CD8-positive, alpha-beta T cell (primary cell): ENCODE measurements at regions of chr22 and their contacts with region 1.

Region 1: GRCh38 chr22:49852898-49853894 is at the start of gene ZBED4:
- DNase-seq: peak; percentile 94 to 100 (median 99)
- ATAC-seq: peak; percentile 86
- H3K4me3 ChIP-seq: peak within 1 kb of the TSS; percentile 53 to 80
- H3K4me3 Mint-ChIP-seq: peak within 1 kb of the TSS; percentile 94
- H3K27ac ChIP-seq: peak within 1 kb of the TSS; percentile 55 to 60
- H3K27ac Mint-ChIP-seq: peak within 1 kb of the TSS; percentile 93
- H3K4me1 ChIP-seq: peaks cover 45% of the 10 kb centered on the region
- H3K4me1 Mint-ChIP-seq: peaks cover 50% of the 10 kb centered on the region
- H3K27me3 ChIP-seq: peaks cover 0 to 12% of the 10 kb centered on the region in 2 experiments
- H3K27me3 Mint-ChIP-seq: no peaks in the 10 kb centered on the region
- CTCF ChIP-seq: no peak
- total RNA-seq, gene ZBED4: 16.2 to 16.6 TPM

Region 2: DNA sequence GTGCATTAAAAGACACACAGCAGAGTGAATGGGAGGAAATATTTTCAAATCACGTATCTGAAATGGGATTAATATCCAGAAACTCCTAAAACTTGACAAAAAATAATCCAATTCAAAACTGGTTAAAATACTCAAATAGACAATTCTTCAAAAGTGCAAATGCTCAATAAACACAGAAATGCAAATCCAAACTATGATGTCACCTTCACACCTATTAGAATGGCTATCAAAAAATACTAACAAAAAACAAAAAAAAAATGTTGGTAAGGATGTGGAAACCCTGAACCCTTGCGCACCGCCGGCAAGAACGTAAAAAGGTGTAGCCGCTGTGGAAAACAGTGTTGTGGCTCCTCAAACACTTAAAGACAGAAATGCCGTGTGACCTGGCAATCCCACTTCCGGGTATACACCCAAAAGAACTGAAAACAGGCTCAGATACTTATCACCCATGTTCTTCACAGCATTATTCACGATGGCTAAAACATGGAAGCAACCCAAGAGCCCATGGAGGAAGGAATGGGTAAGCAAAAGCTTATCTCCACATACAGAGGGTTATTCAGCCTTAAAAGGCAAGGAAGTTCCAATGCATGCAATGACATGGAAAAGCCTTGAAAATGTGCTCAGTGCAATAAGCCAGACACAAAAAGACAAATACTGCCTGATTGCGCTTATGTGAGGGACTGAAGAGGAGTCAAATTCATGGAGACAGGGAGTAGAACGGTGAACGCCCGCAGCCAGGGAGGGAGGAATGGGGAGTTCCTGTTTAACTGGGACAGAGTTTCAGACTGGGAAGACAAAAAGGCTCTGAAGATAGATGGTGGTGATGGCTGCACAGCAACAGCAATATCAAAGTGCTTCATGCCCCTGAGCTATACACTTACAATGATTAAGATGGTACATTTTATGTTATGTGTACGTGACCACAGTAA is 45.2 kb before region 1 on chr22:
- CTCF ChIA-PET with region 1: no interaction called
- POLR2A ChIA-PET with region 1: no interaction called
- intact Hi-C with region 1: loop called in 1 of 2 experiments (anchors 5 kb)
- DNase-seq: peak in 8 of 9 experiments; percentile 30 to 84 (median 61)
- ATAC-seq: peak; percentile 82
- H3K4me3 ChIP-seq: no peak overlapping the region
- H3K4me3 Mint-ChIP-seq: peak overlapping the region; percentile 49
- H3K27ac ChIP-seq: peak overlapping the region; percentile 19 to 44
- H3K27ac Mint-ChIP-seq: peak overlapping the region; percentile 94
- H3K4me1 ChIP-seq: peaks cover 69% of the 10 kb centered on the region
- H3K4me1 Mint-ChIP-seq: peaks cover 77% of the 10 kb centered on the region
- H3K27me3 ChIP-seq: no peaks in the 10 kb centered on the region
- H3K27me3 Mint-ChIP-seq: no peaks in the 10 kb centered on the region
- CTCF ChIP-seq: no peak

Region 3: DNA sequence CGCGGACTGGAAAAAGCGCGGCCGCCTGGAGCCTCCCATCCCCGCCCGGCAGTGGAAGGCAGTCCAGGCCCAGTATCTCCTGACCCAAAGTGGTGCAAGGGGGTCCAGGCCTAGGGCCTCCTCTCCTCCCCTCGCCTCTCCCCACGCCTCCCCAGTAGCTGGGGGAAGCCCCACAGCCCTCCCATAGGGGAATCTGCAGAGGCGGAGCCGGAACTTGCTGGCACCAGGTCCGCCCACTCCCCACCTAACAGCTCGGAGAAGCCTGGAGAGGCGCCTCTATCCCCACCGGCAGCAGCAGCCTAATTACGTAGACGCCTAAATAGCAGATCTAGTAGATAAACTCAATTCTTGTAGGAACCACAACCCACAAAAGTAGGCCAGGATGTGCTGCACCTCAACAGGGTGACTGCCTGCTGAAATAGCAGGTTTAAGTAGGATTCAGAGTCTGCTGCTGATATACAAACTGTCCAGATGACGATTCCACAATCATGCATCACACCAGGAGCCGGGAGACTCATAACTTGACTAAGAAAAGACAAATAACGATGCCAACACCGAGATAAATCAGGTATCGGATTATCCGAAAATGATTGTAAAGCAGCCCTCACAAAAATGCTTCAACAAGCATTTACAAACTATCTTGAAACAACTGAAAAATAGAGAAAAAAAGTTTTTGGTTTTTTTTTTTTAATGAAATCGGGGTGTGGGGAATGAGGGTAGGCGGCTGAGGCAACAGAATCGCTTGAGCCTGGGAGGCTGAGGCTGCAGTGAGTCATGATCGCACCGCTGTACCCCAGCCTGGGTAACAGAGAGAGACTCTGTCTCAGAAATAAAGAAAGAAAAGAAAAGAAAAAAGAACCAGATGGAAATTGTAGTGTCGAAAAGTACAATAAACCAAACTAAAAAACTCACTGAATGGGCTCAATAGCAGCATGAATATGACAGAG is 14.2 kb before region 1 on chr22:
- CTCF ChIA-PET with region 1: interaction called, 5 read pairs
- POLR2A ChIA-PET with region 1: interaction called, 8 read pairs
- intact Hi-C with region 1: loop called (anchors 1 kb)
- DNase-seq: peak; percentile 75 to 98 (median 87)
- ATAC-seq: peak; percentile 94
- H3K4me3 ChIP-seq: peak overlapping the region; percentile 39 to 65
- H3K4me3 Mint-ChIP-seq: peak overlapping the region; percentile 66
- H3K27ac ChIP-seq: peak overlapping the region; percentile 84 to 86
- H3K27ac Mint-ChIP-seq: peak overlapping the region; percentile 97
- H3K4me1 ChIP-seq: peaks cover 17% of the 10 kb centered on the region
- H3K4me1 Mint-ChIP-seq: peaks cover 23% of the 10 kb centered on the region
- H3K27me3 ChIP-seq: no peaks in the 10 kb centered on the region
- H3K27me3 Mint-ChIP-seq: no peaks in the 10 kb centered on the region
- CTCF ChIP-seq: no peak

Region 4: DNA sequence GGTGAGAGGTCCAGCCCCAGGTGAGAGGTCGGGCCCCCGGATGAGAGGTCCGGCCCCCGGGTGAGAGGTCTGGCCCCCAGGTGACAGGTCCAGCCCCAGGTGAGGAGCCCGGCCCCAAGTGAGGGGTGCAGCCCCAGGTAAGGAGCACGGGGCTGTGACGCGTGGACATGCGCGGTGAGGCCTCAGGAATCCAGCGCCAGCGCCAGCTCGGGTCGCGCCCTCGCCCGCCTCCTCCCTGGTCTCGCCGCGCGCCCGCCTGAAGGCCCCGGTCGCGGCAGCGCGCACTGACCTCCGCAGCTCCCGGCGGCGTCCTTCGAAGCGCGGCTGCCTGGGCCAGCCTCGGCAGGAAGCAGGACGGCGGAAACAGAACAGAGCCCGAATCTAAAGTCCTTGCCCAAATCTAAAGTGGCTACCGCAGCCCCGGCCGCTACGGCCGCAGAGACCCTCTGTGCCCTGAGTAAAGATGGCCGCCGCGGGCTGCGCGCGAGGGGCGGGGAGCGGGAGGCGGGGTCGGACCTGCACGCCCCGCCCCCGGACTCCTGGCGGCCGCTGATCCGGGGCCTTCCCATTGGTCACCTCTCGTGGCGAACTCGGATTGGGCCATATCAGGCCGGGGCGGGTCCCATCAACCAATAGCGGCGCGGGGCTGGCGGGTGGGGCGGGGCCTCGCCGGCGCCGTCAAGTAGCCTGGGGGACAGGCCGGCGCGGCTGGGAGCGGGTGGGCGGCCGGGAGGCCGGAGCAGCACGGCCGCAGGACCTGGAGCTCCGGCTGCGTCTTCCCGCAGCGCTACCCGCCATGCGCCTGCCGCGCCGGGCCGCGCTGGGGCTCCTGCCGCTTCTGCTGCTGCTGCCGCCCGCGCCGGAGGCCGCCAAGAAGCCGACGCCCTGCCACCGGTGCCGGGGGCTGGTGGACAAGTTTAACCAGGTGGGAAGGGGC is 65.0 kb after region 1 on chr22 and contains the starts of genes ALG12 and CRELD2:
- CTCF ChIA-PET with region 1: no interaction called
- POLR2A ChIA-PET with region 1: no interaction called
- intact Hi-C with region 1: loop called (anchors 1 kb)
- DNase-seq: peak; percentile 92 to 98 (median 96)
- ATAC-seq: peak; percentile 99
- H3K4me3 ChIP-seq: peak within 1 kb of the TSS; percentile 86 to 99
- H3K4me3 Mint-ChIP-seq: peak within 1 kb of the TSS; percentile 88
- H3K27ac ChIP-seq: peak within 1 kb of the TSS; percentile 72 to 83
- H3K27ac Mint-ChIP-seq: peak within 1 kb of the TSS; percentile 84
- H3K4me1 ChIP-seq: peaks cover 22% of the 10 kb centered on the region
- H3K4me1 Mint-ChIP-seq: peaks cover 28% of the 10 kb centered on the region
- H3K27me3 ChIP-seq: no peaks in the 10 kb centered on the region
- H3K27me3 Mint-ChIP-seq: no peaks in the 10 kb centered on the region
- CTCF ChIP-seq: no peak
- total RNA-seq, gene ALG12: 11.4 to 15.2 TPM
- total RNA-seq, gene CRELD2: 26.3 to 28.1 TPM